Activated T-helper 1 cell treated with anti-CD3 and anti-CD28 coated beads, Interleukin-12 subunit alpha, Interleukin-12 subunit beta, Interleukin-2, Interleukin-4 antibody, amounts not matched to agents 30 ng/mL and 10 ng/mL and 1 ng/mL, durations not matched to agents 14 hours and 24 hours and 36 hours (primary cell): ENCODE measurements at regions of chr16 and their contacts with region 1.

Region 1: GRCh38 chr16:69565671-69566239 is at the start of gene NFAT5:
- DNase-seq: peak; percentile 90
- H3K4me3 Mint-ChIP-seq: peak within 1 kb of the TSS; percentile 100
- H3K27ac Mint-ChIP-seq: peak within 1 kb of the TSS; percentile 99
- H3K4me1 Mint-ChIP-seq: peaks cover 69% of the 10 kb centered on the region
- H3K27me3 Mint-ChIP-seq: no peaks in the 10 kb centered on the region
- total RNA-seq, gene NFAT5: 54.2 and 54.4 TPM in 2 replicates

Region 2: GRCh38 chr16:69339289-69340108 is 226.3 kb before region 1 on chr16 and contains the starts of genes COG8 and NIP7:
- intact Hi-C with region 1: loop called (anchors 5 kb)
- DNase-seq: peak; percentile 91
- H3K4me3 Mint-ChIP-seq: peak within 1 kb of the TSS; percentile 99
- H3K27ac Mint-ChIP-seq: peak within 1 kb of the TSS; percentile 99
- H3K4me1 Mint-ChIP-seq: peaks cover 43% of the 10 kb centered on the region
- H3K27me3 Mint-ChIP-seq: no peaks in the 10 kb centered on the region
- total RNA-seq, gene COG8: 45.3 and 46.5 TPM in 2 replicates
- total RNA-seq, gene NIP7: 80.7 and 85.8 TPM in 2 replicates

Region 3: DNA sequence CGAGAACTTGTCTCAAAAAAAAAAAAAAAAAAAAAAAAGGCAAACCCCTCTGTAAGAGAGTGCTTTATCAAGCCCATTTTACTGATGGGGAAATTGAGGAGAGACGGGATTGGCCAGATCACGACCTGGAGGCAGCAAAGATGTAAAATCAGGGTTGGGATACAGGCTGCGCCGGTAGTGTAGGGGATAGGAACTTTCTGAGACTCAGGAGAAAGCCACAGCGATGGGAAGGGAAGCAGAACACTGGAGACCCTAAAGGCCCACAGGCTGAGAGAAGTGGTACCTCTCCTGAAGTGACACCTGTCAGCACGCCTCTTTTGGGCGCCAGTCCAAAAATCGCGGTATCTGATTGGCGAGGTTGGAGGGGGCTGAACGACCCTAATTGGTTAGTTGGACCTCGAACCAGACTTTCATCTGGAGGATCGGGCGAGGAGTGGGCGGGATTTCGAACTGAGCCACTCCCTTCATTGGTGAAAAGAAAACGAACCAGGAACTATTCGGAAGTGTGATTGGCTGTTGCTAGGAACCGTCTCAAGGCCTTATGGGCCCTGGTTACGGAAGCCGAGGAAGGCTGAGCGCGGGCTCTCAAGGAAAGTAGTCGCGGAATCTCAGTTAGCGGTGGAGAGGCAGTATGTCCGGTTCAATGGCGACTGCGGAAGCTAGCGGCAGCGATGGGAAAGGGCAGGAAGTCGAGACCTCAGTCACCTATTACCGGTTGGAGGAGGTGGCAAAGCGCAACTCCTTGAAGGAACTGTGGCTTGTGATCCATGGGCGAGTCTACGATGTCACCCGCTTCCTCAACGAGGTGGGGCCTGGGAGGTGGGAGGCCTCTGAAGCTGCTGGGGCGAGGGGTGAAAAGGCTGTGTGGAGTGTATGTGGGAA is 141.5 kb before region 1 on chr16 and contains the start of gene CYB5B:
- intact Hi-C with region 1: loop called (anchors 1 kb)
- DNase-seq: peak; percentile 91
- H3K4me3 Mint-ChIP-seq: peak within 1 kb of the TSS; percentile 92
- H3K27ac Mint-ChIP-seq: peak within 1 kb of the TSS; percentile 90
- H3K4me1 Mint-ChIP-seq: peaks cover 25% of the 10 kb centered on the region
- H3K27me3 Mint-ChIP-seq: no peaks in the 10 kb centered on the region
- total RNA-seq, gene CYB5B: 157 and 166 TPM in 2 replicates

Region 4: GRCh38 chr16:69494993-69495392 is 70.8 kb before region 1 on chr16:
- intact Hi-C with region 1: loop called (anchors 1 kb)
- DNase-seq: peak; percentile 10
- H3K4me3 Mint-ChIP-seq: no peak overlapping the region
- H3K27ac Mint-ChIP-seq: no peak overlapping the region
- H3K4me1 Mint-ChIP-seq: peaks cover 8% of the 10 kb centered on the region
- H3K27me3 Mint-ChIP-seq: peaks cover 2% of the 10 kb centered on the region

Region 5: GRCh38 chr16:69581297-69581696 is 15.5 kb after region 1 on chr16:
- intact Hi-C with region 1: loop called (anchors 1 kb)
- DNase-seq: no peak
- H3K4me3 Mint-ChIP-seq: no peak overlapping the region
- H3K27ac Mint-ChIP-seq: peak overlapping the region; percentile 82
- H3K4me1 Mint-ChIP-seq: peaks cover 32% of the 10 kb centered on the region
- H3K27me3 Mint-ChIP-seq: no peaks in the 10 kb centered on the region

Region 6: DNA sequence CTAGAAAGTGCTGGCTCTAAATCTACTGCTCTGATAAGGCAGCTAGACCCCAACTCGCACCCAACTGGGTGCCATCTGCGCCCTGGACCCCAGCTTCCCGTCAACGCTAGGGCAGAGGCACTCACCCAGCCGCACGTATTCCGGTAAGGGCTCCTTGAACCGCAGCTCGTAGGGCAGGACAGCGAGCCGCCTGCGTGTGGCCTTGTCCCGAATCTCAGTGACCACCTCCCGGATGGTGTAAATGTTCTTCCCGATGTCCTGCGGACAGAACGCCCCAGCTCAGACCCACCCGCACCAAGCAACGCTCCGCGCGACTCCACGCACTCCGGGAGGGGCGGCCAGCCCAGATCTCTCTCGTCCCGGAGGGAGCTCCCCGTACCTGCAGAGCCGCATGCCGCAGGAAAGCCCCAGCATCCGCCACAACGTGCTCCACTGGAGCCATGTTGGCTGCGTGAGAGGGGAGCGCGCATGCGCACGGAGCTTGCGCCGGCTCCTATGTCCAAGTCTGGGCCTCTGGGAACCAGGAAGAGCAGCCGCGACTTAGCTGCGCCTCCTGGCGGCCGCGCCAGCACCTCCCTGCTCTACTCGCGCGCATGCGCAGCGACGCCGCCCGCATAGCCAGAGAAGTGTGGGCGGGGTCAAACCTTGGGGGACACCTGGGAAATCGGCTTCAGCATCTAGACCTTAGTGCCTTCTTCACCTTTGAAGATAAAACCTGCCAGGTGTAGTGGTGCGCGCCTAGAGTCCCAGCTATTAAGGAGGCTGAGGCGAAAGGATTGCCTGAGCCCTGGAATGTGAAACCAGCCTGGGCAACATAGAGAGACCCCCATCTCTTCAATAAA is 188.9 kb after region 1 on chr16 and contains the start of gene NOB1:
- intact Hi-C with region 1: loop called (anchors 1 kb)
- DNase-seq: peak; percentile 97
- H3K4me3 Mint-ChIP-seq: peak within 1 kb of the TSS; percentile 99
- H3K27ac Mint-ChIP-seq: peak within 1 kb of the TSS; percentile 98
- H3K4me1 Mint-ChIP-seq: peaks cover 32% of the 10 kb centered on the region
- H3K27me3 Mint-ChIP-seq: peaks cover 2% of the 10 kb centered on the region
- total RNA-seq, gene NOB1: 132 and 133 TPM in 2 replicates